Spleen (tissue), 13 donors: ENCODE measurements at regions of chr9 and their contacts with region 1.

Region 1: GRCh38 chr9:71768388-71769174 is at the start of gene CEMIP2:
- DNase-seq: peak; percentile 99
- H3K4me3 ChIP-seq: peak within 1 kb of the TSS; percentile 62 to 76 (median 72)
- H3K27ac ChIP-seq: peak within 1 kb of the TSS; percentile 94 to 99 (median 98)
- H3K4me1 ChIP-seq: peaks cover 31 to 62% (median 54%) of the 10 kb centered on the region in 6 donors
- H3K27me3 ChIP-seq: peaks cover 0 to 5% (median 0%) of the 10 kb centered on the region in 7 donors
- CTCF ChIP-seq: peak in 6 of 11 experiments; percentile 28 to 79 (median 49)
- POLR2A ChIP-seq: peak; percentile 55 to 73 (median 69)
- total RNA-seq, gene CEMIP2: 71.8 to 175 (median 99.4) TPM

Region 2: DNA sequence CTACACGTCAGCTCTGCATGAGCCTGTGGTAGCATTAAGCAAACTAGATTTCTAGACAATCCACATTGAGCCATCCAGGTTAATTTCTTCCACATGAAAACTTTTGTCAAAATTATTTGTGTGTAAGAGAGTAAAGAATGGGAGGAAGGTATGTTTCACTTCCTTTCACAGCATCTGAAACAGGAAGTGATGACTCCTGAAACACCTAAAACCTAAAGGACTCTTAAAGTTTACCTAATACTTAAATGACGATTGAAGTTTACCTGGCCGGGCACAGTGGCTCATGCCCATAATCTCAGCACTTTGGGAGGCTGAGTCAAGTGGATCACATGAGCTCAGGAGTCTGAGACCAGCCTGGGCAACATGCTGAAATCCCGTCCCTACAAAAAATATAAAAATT is 224.1 kb before region 1 on chr9:
- intact Hi-C with region 1: no loop called
- DNase-seq: no peak
- H3K4me3 ChIP-seq: no peak overlapping the region
- H3K27ac ChIP-seq: no peak overlapping the region
- H3K4me1 ChIP-seq: peaks cover 0 to 20% (median 4%) of the 10 kb centered on the region in 6 donors
- H3K27me3 ChIP-seq: no peaks in the 10 kb centered on the region
- CTCF ChIP-seq: no peak
- POLR2A ChIP-seq: no peak

Region 3: DNA sequence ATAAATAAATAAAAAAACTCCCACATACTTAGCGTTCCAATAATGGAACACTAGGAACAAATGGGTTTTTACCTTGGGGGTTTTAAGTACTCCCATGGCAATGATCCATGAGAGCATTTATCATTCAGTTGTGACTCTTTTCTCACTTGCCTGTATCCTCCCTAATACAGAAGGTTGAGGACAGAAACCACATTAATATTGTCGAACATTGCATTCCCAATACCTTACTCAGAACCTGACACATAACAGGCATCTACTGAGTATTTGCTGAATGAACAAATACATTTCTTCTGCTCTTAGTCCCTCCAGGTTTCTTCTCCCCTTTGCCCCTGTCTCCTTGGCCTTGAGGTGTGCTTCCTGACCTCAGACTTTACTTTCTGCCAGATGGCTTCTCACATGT is 176.2 kb before region 1 on chr9:
- intact Hi-C with region 1: no loop called
- DNase-seq: no peak
- H3K4me3 ChIP-seq: no peak overlapping the region
- H3K27ac ChIP-seq: no peak overlapping the region
- H3K4me1 ChIP-seq: no peaks in the 10 kb centered on the region
- H3K27me3 ChIP-seq: peaks cover 0 to 8% (median 0%) of the 10 kb centered on the region in 7 donors
- CTCF ChIP-seq: no peak
- POLR2A ChIP-seq: no peak

Region 4: GRCh38 chr9:71614409-71615010 is 154.1 kb before region 1 on chr9:
- intact Hi-C with region 1: loop called (anchors 5 kb)
- DNase-seq: no peak
- H3K4me3 ChIP-seq: no peak overlapping the region
- H3K27ac ChIP-seq: no peak overlapping the region
- H3K4me1 ChIP-seq: no peaks in the 10 kb centered on the region
- H3K27me3 ChIP-seq: no peaks in the 10 kb centered on the region
- CTCF ChIP-seq: no peak
- POLR2A ChIP-seq: no peak

Region 5: DNA sequence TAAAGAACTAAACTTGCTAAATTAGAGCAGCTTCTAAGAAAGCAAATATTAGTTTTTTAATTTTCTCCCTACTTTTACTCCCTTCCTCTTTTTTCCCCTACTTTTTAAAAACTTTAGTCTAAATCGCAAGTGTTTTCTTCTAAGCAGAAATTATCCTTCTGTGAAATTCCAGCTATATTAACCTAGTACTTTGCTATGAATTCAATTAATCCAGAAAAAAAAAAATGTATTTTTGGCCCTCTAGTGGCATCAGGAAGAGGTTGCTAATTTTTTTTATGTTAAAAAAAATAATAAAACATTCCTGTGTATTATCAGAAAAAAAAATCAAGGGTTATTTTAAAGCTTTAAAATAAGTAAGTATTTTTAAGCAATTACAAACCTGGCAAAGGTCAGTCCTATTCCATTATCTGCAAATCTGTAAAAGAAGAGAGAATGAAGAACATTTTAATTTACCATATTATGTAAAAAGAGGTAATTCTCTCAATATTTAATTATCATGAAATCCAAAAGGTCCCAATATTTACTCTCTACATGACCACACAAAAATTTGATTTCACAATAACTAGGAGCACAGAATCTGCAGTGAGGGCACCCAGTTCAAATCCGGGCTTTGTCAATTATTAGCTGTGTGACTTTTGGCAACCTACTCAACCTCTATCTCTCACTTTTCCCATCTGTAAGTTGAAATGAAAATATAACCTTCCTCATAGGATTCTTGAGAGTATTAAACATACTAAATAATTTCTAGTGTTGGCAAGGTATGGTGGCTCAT is 52.3 kb before region 1 on chr9:
- intact Hi-C with region 1: loop called (anchors 10 kb)
- DNase-seq: no peak
- H3K4me3 ChIP-seq: no peak overlapping the region
- H3K27ac ChIP-seq: no peak overlapping the region
- H3K4me1 ChIP-seq: peaks cover 0 to 8% (median 0%) of the 10 kb centered on the region in 6 donors
- H3K27me3 ChIP-seq: no peaks in the 10 kb centered on the region
- CTCF ChIP-seq: peak in 10 of 11 experiments; percentile 9 to 55 (median 30)
- POLR2A ChIP-seq: no peak